ENCODE measurements at regions of chr3 and their contacts with region 1.

Region 1: DNA sequence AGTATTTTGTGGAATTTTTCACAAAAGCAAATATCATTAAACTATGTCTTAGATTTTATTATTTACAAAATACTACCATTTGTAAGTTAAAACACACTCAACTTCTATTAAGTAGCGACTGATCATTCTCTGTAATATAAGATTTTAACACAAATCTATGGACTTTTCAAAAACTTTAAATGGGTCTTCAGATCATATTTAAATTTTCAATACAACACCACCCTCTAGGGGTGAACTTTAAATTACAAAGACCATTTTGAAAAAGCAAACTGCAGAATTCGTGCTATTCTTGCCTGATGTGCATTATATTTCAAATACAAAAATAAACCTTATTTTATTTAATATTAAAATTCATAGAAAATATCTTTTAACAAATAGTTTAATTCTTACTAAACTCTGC is 8.2 kb upstream of the VGLL4 start:
- DNase-seq: no peak
- ATAC-seq: peak; percentile 25
- H3K4me3 Mint-ChIP-seq: no peak overlapping the region
- H3K27ac Mint-ChIP-seq: no peak overlapping the region
- H3K4me1 Mint-ChIP-seq: peaks cover 15% of the 10 kb centered on the region
- H3K27me3 Mint-ChIP-seq: no peaks in the 10 kb centered on the region
- CTCF ChIP-seq: no peak

Region 2: GRCh38 chr3:10945683-10946287 is 706.1 kb before region 1 on chr3:
- CTCF ChIA-PET with region 1: interaction called, 4 read pairs
- POLR2A ChIA-PET with region 1: no interaction called
- intact Hi-C with region 1: loop called (anchors 1 kb)
- DNase-seq: peak; percentile 37
- ATAC-seq: no peak
- H3K4me3 Mint-ChIP-seq: no peak overlapping the region
- H3K27ac Mint-ChIP-seq: no peak overlapping the region
- H3K4me1 Mint-ChIP-seq: no peaks in the 10 kb centered on the region
- H3K27me3 Mint-ChIP-seq: peaks cover 13% of the 10 kb centered on the region
- CTCF ChIP-seq: no peak

Region 3: GRCh38 chr3:11155341-11156025 is 496.4 kb before region 1 on chr3:
- CTCF ChIA-PET with region 1: no interaction called
- POLR2A ChIA-PET with region 1: no interaction called
- intact Hi-C with region 1: loop called (anchors 5 kb)
- DNase-seq: no peak
- ATAC-seq: peak; percentile 25
- H3K4me3 Mint-ChIP-seq: peak overlapping the region; percentile 70
- H3K27ac Mint-ChIP-seq: no peak overlapping the region
- H3K4me1 Mint-ChIP-seq: peaks cover 25% of the 10 kb centered on the region
- H3K27me3 Mint-ChIP-seq: peaks cover 45% of the 10 kb centered on the region
- CTCF ChIP-seq: no peak

Region 4: GRCh38 chr3:11236595-11237461 is 415.1 kb before region 1 on chr3:
- CTCF ChIA-PET with region 1: interaction called, 3 read pairs
- POLR2A ChIA-PET with region 1: no interaction called
- intact Hi-C with region 1: loop called (anchors 1 kb)
- DNase-seq: peak; percentile 62
- ATAC-seq: peak; percentile 76
- H3K4me3 Mint-ChIP-seq: no peak overlapping the region
- H3K27ac Mint-ChIP-seq: no peak overlapping the region
- H3K4me1 Mint-ChIP-seq: no peaks in the 10 kb centered on the region
- H3K27me3 Mint-ChIP-seq: peaks cover 21% of the 10 kb centered on the region
- CTCF ChIP-seq: peak; percentile 78

Region 5: DNA sequence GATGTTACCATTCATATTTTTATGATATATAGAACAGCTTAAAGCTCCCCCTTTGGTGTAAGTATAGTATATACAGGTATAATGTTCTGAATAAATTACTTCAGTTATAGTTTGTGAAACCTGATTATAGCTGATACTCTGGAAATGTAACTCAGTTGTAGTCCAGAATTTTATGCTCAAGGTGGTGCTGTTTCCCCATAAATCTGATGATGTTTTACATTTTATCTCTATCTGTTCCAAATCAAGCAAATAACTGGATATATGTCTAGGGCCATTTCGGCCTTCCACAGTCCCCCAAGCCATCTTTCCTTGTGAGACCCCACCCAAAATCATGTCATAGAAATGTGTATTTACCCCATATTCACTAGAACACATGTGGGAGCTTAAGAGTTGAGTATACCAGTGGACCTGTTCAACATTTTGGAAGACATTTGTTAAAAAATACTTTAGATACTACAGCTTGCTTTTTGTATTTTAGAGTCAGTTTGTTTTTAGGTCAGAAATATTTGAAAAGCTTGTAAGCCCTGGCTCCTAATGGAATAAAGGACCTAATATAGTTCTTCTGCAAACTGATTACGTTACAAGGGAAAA is 272.6 kb before region 1 on chr3:
- CTCF ChIA-PET with region 1: interaction called, 61 read pairs
- POLR2A ChIA-PET with region 1: no interaction called
- intact Hi-C with region 1: loop called (anchors 1 kb)
- DNase-seq: no peak
- ATAC-seq: peak; percentile 21
- H3K4me3 Mint-ChIP-seq: no peak overlapping the region
- H3K27ac Mint-ChIP-seq: no peak overlapping the region
- H3K4me1 Mint-ChIP-seq: no peaks in the 10 kb centered on the region
- H3K27me3 Mint-ChIP-seq: no peaks in the 10 kb centered on the region
- CTCF ChIP-seq: no peak

Region 6: GRCh38 chr3:11719406-11720230 is 67.7 kb after region 1 on chr3:
- CTCF ChIA-PET with region 1: no interaction called
- POLR2A ChIA-PET with region 1: no interaction called
- intact Hi-C with region 1: no loop called
- DNase-seq: peak; percentile 76
- ATAC-seq: peak; percentile 69
- H3K4me3 Mint-ChIP-seq: peak overlapping the region; percentile 94
- H3K27ac Mint-ChIP-seq: no peak overlapping the region
- H3K4me1 Mint-ChIP-seq: peaks cover 21% of the 10 kb centered on the region
- H3K27me3 Mint-ChIP-seq: no peaks in the 10 kb centered on the region
- CTCF ChIP-seq: no peak

Region 7: DNA sequence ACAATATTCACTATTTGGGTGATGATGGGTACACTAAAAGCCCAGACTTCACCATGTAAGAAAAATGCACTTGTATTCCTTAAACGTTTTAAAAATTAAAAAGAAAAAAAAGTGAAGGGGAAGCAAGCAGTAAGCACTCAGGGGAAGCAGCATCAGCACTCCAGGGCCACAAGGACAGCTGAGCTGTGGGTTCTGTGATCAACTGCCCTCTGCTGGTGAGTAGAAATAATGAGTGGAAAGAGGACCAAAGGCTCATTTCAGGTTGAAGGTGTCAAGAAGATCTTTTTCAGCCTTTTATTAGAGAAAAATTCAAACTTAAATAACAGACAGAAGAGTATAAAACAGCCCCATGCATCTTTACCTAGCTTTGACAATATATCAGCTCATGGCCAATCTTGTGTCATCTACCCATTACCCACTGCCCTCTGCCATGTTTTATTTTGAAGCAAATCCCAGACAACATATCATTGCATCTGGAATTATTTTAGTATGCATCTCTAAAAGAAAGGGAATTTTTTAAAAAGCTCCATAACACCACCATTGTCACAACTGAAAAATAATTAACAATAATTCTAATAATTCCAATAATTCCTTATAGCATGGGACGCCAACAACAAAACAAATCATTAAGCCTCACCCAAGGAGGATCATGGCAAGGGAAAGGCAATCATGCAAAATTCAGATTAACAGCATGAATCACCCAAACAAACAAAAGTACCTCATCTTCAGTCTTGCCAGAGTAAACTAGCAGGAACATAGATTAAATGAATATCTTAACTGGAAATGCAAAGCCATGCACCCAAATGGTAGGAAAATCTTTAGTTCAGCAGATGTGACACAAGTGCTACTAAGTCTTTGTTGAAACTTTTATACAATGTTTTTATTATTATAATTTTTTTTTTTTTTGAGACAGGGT is 152.3 kb after region 1 on chr3:
- CTCF ChIA-PET with region 1: interaction called, 5 read pairs
- POLR2A ChIA-PET with region 1: no interaction called
- intact Hi-C with region 1: loop called (anchors 1 kb)
- DNase-seq: no peak
- ATAC-seq: peak; percentile 71
- H3K4me3 Mint-ChIP-seq: no peak overlapping the region
- H3K27ac Mint-ChIP-seq: no peak overlapping the region
- H3K4me1 Mint-ChIP-seq: no peaks in the 10 kb centered on the region
- H3K27me3 Mint-ChIP-seq: no peaks in the 10 kb centered on the region
- CTCF ChIP-seq: no peak

Measured in activated B cell treated with CpG ODN at 0.5 μM for 24 hours (primary cell).